ENCODE measurements at regions of chr16 and their contacts with region 1.

Region 1: GRCh38 chr16:69726296-69727060 is at the start of gene NQO1:
- DNase-seq: peak; percentile 79 to 86 (median 83)
- H3K4me3 ChIP-seq: peak within 1 kb of the TSS; percentile 52 to 63
- H3K4me3 Mint-ChIP-seq: peak within 1 kb of the TSS; percentile 87 to 97 (median 94)
- H3K27ac ChIP-seq: peak within 1 kb of the TSS; percentile 49
- H3K27ac Mint-ChIP-seq: peak within 1 kb of the TSS; percentile 85 to 96 (median 92)
- H3K4me1 ChIP-seq: peaks cover 20% of the 10 kb centered on the region
- H3K4me1 Mint-ChIP-seq: peaks cover 13 to 37% (median 16%) of the 10 kb centered on the region in 4 donors
- H3K27me3 ChIP-seq: no peaks in the 10 kb centered on the region
- H3K27me3 Mint-ChIP-seq: no peaks in the 10 kb centered on the region
- total RNA-seq, gene NQO1: 4.8 to 5.9 TPM

Region 2: DNA sequence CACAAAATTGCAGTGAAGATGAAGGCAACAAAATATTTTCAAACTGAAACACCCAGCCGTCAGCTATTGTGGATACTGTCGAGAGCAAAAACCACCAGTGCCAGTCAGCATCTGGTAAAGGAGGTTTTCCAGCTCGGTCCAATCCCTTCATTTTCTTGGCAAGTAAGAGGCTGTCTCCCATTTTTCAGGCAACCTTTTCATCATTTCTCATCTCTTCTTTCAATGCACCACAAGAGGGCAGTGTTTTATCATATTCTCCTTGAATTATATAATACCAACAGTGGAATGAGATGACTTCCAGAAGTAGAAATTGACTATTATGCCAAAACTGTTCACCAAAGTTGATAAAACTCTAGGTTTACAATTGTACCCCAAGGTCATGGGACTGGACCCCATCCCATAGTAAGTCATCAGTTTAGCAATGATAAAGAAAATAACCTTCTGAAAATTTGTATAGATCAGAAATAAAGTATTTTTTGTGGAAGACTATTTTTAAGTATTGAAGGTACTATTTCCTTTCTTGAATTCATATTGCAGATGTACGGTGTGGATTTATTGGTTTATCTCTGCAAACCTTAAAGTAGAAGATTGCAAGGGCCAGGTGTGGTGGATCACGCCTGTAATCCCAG is 16.9 kb before region 1 on chr16:
- CTCF ChIA-PET with region 1: interaction called, 48 read pairs
- POLR2A ChIA-PET with region 1: interaction called, 7 read pairs
- intact Hi-C with region 1: loop called (anchors 1 kb)
- DNase-seq: peak in 4 of 5 donors; percentile 49 to 60 (median 58)
- H3K4me3 ChIP-seq: no peak overlapping the region
- H3K4me3 Mint-ChIP-seq: no peak overlapping the region
- H3K27ac ChIP-seq: no peak overlapping the region
- H3K27ac Mint-ChIP-seq: peak overlapping the region in 6 of 7 donors; percentile 0 to 70 (median 38)
- H3K4me1 ChIP-seq: peaks cover 6% of the 10 kb centered on the region
- H3K4me1 Mint-ChIP-seq: peaks cover 0 to 4% (median 2%) of the 10 kb centered on the region in 4 donors
- H3K27me3 ChIP-seq: no peaks in the 10 kb centered on the region
- H3K27me3 Mint-ChIP-seq: no peaks in the 10 kb centered on the region

Region 3: GRCh38 chr16:69761983-69762813 is 35.7 kb after region 1 on chr16 and contains the start of gene WWP2:
- CTCF ChIA-PET with region 1: interaction called, 72 read pairs
- POLR2A ChIA-PET with region 1: interaction called, 23 read pairs
- intact Hi-C with region 1: no loop called
- DNase-seq: peak; percentile 80 to 83 (median 82)
- H3K4me3 ChIP-seq: peak within 1 kb of the TSS; percentile 67 to 97
- H3K4me3 Mint-ChIP-seq: peak within 1 kb of the TSS; percentile 92 to 97 (median 93)
- H3K27ac ChIP-seq: peak within 1 kb of the TSS; percentile 90
- H3K27ac Mint-ChIP-seq: peak within 1 kb of the TSS; percentile 94 to 99 (median 98)
- H3K4me1 ChIP-seq: peaks cover 32% of the 10 kb centered on the region
- H3K4me1 Mint-ChIP-seq: peaks cover 17 to 51% (median 34%) of the 10 kb centered on the region in 4 donors
- H3K27me3 ChIP-seq: no peaks in the 10 kb centered on the region
- H3K27me3 Mint-ChIP-seq: no peaks in the 10 kb centered on the region
- total RNA-seq, gene WWP2: 76.3 to 77.0 TPM

Measured in CD4-positive, alpha-beta memory T cell (primary cell).